Common myeloid progenitor, CD34-positive (primary cell): ENCODE measurements at regions of chr20 and their contacts with region 1.

Region 1: DNA sequence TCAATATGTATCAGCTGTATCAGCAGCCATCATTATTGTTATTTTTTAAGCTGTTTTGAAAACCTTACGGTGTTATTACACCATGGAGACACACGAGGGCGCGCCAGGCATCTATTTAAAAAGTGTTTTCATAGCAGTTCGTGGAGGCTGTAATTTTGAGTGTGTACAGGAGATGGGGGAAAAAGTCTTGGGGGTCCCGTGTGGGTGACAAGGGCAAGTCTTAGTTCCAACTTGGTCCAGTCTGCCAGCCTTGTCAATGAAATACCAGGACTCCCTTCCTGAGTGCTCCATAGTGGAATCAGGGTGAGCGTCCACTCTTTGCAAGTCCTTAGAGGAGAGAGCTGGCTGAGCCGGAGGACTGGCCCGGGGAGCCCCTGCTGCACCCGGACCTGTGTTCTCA is 43.3 kb downstream of the SLC2A10 start:
- DNase-seq: peak; percentile 42 to 75 (median 67)
- H3K4me3 ChIP-seq: no peak overlapping the region
- H3K27ac ChIP-seq: no peak overlapping the region
- H3K4me1 ChIP-seq: no peaks in the 10 kb centered on the region
- H3K27me3 ChIP-seq: peaks cover 0 to 6% (median 2%) of the 10 kb centered on the region in 5 experiments

Region 2: GRCh38 chr20:46764068-46764467 is 11.3 kb after region 1 on chr20:
- CTCF ChIA-PET with region 1: interaction called, 14 read pairs
- POLR2A ChIA-PET with region 1: no interaction called
- DNase-seq: no peak
- H3K4me3 ChIP-seq: no peak overlapping the region
- H3K27ac ChIP-seq: no peak overlapping the region
- H3K4me1 ChIP-seq: no peaks in the 10 kb centered on the region
- H3K27me3 ChIP-seq: peaks cover 0 to 5% (median 0%) of the 10 kb centered on the region in 5 experiments